ENCODE measurements at regions of chr3 and their contacts with region 1.

Region 1: DNA sequence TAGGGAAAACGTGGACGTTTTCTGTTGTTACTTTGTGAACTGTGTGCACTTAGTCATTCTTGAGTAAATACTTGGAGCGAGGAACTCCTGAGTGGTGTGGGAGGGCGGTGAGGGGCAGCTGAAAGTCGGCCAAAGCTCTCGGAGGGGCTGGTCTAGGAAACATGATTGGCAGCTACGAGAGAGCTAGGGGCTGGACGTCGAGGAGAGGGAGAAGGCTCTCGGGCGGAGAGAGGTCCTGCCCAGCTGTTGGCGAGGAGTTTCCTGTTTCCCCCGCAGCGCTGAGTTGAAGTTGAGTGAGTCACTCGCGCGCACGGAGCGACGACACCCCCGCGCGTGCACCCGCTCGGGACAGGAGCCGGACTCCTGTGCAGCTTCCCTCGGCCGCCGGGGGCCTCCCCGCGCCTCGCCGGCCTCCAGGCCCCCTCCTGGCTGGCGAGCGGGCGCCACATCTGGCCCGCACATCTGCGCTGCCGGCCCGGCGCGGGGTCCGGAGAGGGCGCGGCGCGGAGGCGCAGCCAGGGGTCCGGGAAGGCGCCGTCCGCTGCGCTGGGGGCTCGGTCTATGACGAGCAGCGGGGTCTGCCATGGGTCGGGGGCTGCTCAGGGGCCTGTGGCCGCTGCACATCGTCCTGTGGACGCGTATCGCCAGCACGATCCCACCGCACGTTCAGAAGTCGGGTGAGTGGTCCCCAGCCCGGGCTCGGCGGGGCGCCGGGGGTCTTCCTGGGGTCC is at the start of gene TGFBR2:
- DNase-seq: peak; percentile 97
- ATAC-seq: peak; percentile 96 to 98
- total RNA-seq, gene TGFBR2: 234 to 243 TPM

Region 2: DNA sequence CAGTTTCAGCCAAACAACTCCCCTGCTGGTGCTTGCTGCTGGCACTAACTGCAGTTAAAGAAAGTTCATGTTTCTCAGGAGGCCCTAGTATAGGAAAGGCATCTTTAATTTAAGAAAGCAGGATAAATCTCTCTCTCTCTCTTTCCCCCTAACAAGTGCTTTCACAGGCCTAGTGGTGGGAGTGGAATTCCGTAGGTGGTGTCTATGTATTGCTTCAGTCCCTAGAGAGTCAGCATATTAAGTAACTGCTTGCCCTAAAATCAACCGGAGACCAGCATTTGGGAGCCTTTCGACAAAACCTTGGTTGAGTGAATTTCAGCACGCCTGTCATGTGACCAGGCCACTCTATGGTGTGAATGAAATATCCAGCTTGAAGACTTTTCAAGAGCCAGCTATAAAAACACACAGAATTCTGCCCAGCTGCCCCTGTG is 169.3 kb before region 1 on chr3:
- intact Hi-C with region 1: loop called in 1 of 2 experiments (anchors 5 kb)
- DNase-seq: peak; percentile 36
- ATAC-seq: peak; percentile 63 to 81

Region 3: DNA sequence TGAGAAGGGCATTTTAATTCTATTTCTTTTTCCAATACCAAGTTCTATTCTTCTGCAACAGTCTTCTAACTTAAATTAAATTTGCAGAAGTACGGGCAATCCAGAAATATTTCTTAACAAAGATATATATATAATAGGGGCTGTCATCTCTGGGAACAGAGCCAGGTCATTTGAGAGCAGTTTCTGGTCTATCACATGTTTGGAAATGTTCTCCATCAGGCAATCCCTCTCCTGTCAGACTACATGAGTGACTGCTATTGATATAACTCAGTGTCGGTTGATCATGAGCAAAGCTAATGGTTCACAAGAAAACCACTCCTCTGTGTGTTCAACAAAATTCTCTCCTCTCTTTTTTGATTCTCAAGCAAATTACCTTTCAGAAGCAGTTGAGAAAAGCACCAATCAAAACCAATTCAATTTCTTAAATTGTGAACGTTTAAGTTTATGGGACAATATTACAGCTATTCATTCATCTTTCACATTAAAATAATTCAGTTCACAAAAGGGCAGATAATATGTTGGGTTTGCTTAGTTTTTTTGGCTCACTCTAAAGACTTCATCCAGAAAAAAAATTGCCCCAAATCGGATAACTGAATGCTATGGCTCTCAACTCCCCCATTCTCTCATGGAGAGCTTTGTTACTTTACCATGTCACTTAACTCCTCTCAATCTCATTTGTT is 153.0 kb before region 1 on chr3:
- intact Hi-C with region 1: loop called in 1 of 2 experiments (anchors 5 kb)
- DNase-seq: no peak
- ATAC-seq: peak; percentile 31 to 64

Region 4: DNA sequence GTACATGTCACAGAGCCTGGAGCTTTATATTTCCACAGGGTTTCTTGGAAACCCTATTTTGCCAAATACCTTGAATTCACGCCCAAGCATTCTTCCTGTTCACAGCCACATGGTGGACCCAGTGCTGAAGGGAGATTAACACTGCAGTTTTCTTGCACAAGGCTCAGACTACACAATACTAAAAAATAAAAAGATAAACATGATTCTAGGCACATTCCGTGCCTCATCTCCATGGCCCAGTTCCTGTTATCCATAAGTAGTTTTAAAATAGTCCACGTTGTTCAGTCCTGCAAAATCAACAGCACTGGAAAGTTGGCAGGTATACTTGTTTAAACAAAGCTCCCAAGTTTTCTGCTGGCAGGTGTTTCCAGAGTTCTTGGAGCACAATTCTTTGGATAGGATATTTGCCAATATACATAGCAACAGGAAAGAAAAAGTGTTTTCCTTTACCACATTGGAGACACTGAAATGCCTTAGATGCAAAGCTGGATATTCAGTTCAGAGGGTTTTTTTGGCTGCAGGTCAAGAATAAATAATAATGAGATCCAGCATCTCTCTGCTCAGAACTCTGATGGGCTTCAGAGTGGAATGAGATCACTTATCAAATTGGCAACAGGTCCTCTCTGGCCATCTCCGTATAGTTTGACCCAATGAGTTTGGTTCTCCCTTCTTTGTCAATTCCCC is 88.1 kb before region 1 on chr3:
- intact Hi-C with region 1: loop called in 1 of 2 experiments (anchors 5 kb)
- DNase-seq: peak; percentile 43
- ATAC-seq: peak; percentile 85 to 92

Measured in left cardiac atrium (tissue), 4 donors.